PC-3 (cell line): ENCODE measurements at regions of chr1 and their contacts with region 1.

Region 1: DNA sequence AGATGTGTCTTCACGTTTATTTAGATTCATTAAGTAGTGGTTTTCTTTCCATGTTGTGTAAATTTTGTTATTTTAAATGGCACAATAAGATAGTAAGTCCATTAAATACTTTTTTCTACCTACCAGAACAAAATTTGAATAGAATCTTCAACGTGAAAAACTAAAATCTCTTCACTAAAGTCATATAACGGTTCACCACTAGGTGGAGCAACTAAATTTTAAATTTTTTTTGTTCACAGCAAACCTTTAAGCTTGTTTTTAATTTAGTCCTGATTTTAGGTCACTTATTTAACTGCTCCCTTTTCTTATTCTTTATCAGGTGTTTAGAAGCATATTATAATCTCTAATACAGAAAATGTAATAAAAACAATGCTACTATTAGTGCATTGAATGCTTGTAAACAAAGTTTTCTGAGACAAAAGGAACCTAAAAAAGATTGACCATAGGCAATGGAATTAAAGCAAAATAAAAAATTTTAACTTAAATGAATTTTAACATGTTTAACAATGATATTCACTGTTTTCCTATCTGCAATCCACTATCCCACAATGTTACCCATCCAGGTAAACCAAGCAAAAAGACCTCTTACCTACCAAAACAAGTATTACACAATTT is 28.3 kb upstream of the PKN2 start:
- DNase-seq: peak; percentile 60
- ATAC-seq: no peak
- H3K4me3 ChIP-seq: no peak overlapping the region
- H3K27ac ChIP-seq: no peak overlapping the region
- H3K4me1 ChIP-seq: peaks cover 4% of the 10 kb centered on the region; the same call in 1 of the 2 replicates
- H3K27me3 ChIP-seq: no peaks in the 10 kb centered on the region
- CTCF ChIP-seq: peak; percentile 83

Region 2: GRCh38 chr1:88519156-88519555 is 136.6 kb before region 1 on chr1:
- CTCF ChIA-PET with region 1: no interaction called
- POLR2A ChIA-PET with region 1: no interaction called
- intact Hi-C with region 1: no loop called
- DNase-seq: peak; percentile 7
- ATAC-seq: peak; percentile 66
- H3K4me3 ChIP-seq: no peak overlapping the region
- H3K27ac ChIP-seq: no peak overlapping the region
- H3K4me1 ChIP-seq: no peaks in the 10 kb centered on the region
- H3K27me3 ChIP-seq: 0 out of 2 replicates have a peak, but pooled peaks cover 2% of the 10 kb centered on the region
- CTCF ChIP-seq: no peak

Region 3: DNA sequence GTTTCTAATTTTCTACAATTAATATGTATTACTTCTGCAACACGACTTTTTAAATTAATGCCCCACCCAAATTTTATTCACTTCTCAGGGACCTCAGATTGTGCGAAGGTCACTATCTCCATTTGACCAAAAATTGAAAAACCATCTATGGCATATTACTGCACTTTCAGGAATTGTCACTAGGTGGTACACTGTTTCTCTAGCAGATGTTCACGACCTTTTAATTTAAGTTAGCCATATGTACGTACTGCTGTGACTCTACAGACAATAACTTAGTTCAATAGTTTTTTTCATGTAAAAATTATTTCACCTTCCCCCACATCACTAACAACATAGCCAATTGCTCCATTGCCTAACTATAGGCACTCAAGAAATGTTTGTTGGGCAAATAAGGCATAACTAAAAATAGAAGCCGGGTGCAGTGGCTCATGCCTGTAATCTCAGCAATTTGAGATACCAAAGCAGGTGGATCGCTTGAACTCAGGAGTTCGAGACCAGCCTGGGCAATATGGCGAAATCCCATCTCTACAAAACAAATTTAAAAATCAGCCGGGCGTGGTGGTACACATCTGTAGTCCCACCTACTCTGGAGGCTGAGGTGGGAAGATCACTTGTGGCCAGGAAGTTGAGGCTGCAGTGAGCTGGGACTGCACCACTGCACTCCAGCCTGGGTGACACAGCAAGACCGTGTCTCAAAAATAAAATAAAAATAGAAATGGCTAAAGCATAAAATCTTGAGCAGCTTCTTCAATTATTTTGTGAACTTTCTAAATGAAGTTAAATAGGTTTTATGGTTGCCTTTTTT is 47.5 kb before region 1 on chr1:
- CTCF ChIA-PET with region 1: no interaction called
- POLR2A ChIA-PET with region 1: no interaction called
- intact Hi-C with region 1: loop called (anchors 2 kb)
- DNase-seq: peak; percentile 71
- ATAC-seq: peak; percentile 54
- H3K4me3 ChIP-seq: no peak overlapping the region
- H3K27ac ChIP-seq: no peak overlapping the region
- H3K4me1 ChIP-seq: peaks cover 23% of the 10 kb centered on the region
- H3K27me3 ChIP-seq: no peaks in the 10 kb centered on the region
- CTCF ChIP-seq: peak; percentile 84

Region 4: GRCh38 chr1:88847643-88848042 is 191.9 kb after region 1 on chr1:
- CTCF ChIA-PET with region 1: no interaction called
- POLR2A ChIA-PET with region 1: no interaction called
- intact Hi-C with region 1: loop called (anchors 5 kb)
- DNase-seq: no peak
- ATAC-seq: no peak
- H3K4me3 ChIP-seq: no peak overlapping the region
- H3K27ac ChIP-seq: no peak overlapping the region
- H3K4me1 ChIP-seq: no peaks in the 10 kb centered on the region
- H3K27me3 ChIP-seq: no peaks in the 10 kb centered on the region
- CTCF ChIP-seq: no peak